Activated CD4-positive, alpha-beta memory T cell treated with anti-CD3 and anti-CD28 coated beads, Interleukin-2, amount 10 ng/mL, durations not matched to agents 7 days and 5 days (primary cell): ENCODE measurements at regions of chr17 and their contacts with region 1.

Region 1: GRCh38 chr17:16304830-16305229 is 48.4 kb downstream of the CENPV start:
- DNase-seq: no peak
- H3K4me3 Mint-ChIP-seq: no peak overlapping the region
- H3K27ac Mint-ChIP-seq: no peak overlapping the region
- H3K4me1 Mint-ChIP-seq: no peaks in the 10 kb centered on the region
- H3K27me3 Mint-ChIP-seq: no peaks in the 10 kb centered on the region

Region 2: DNA sequence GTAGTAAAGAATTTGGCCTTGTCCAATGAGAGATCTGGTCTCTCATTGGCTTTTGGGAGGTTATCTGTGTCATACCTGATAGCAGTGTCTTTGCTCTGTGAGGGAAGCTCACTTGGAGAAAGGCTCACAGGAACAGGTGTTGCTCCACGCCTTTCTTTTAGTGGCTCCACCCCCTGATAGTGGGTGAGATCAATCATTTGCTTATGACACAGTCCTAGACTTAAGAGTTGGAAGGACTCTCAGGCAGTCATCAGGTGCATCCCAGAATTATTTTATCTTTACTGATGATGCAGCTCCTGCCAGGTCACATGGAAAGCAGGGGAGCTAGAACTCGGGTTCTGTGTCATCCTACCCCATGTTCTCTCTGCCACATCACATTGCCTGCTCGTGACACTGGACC is 10.9 kb before region 1 on chr17:
- CTCF ChIA-PET with region 1: interaction called, 13 read pairs
- POLR2A ChIA-PET with region 1: no interaction called
- DNase-seq: no peak
- H3K4me3 Mint-ChIP-seq: no peak overlapping the region
- H3K27ac Mint-ChIP-seq: no peak overlapping the region
- H3K4me1 Mint-ChIP-seq: peaks cover 15% of the 10 kb centered on the region
- H3K27me3 Mint-ChIP-seq: no peaks in the 10 kb centered on the region

Region 3: GRCh38 chr17:16329519-16330271 is 24.9 kb after region 1 on chr17:
- CTCF ChIA-PET with region 1: no interaction called
- POLR2A ChIA-PET with region 1: no interaction called
- DNase-seq: no peak
- H3K4me3 Mint-ChIP-seq: no peak overlapping the region
- H3K27ac Mint-ChIP-seq: no peak overlapping the region
- H3K4me1 Mint-ChIP-seq: no peaks in the 10 kb centered on the region
- H3K27me3 Mint-ChIP-seq: no peaks in the 10 kb centered on the region